H1 (cell line): ENCODE measurements at regions of chr9 and their contacts with region 1.

Region 1: DNA sequence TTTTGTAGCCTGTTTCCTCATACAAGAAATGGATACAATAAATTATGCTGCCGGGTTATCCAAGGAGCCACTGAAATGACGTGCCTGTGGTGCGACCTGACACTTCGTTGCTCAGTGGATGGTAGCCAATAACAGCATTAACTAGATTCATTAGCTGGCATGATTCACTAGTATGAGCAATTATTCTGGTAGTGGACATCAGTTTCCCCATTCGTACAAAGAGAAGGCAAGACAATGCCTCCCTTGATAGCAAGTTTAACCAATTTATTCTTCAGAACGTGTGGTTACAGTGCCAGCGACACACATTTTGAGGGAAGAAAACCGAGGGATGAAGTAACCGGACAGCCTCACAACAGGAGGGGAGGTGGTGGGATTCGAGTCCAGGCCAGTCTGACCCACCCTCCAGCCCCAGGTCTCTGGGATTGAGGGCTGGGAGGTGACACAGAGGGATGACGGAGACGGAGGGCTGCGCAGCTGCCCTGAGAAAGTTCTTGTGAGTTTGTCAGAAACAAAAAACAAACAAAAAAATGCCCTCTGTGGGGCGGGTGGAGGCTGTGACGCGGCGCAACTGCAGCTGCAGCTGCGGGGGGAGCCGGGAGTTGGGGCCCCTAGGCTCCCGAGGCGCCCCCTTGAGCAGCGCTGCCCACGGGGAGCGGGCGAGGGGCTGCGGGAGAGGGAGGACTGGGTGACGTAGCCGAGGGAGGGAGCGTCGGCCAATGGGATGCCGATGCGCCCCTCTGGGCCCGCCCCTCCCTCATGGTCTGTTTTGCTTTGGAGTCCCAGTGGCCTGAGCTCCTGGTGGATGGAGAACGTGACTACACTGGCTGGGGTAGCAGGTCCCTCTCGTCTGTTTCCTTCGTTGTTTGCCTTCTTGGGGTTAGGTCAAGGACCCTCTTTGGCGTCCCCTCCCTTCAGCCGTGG is 10.9 kb downstream of the LHX2 start:
- DNase-seq: peak in 1 of 2 experiments; percentile 83
- H3K4me3 ChIP-seq: peak overlapping the region in 1 of 4 experiments; percentile 51; a peak in 2 of 8 replicates
- H3K27ac ChIP-seq: no peak overlapping the region
- H3K4me1 ChIP-seq: peaks cover 10 to 19% (median 13%) of the 10 kb centered on the region in 4 experiments
- H3K27me3 ChIP-seq: peaks cover 33 to 69% (median 55%) of the 10 kb centered on the region in 4 experiments
- CTCF ChIP-seq: peak in 1 of 3 experiments; percentile 23; a peak in 1 of 4 replicates
- EP300 ChIP-seq: no peak
- POLR2A ChIP-seq: no peak
- RAD21 ChIP-seq: peak in 1 of 2 experiments; percentile 5; a peak in 2 of 4 replicates

Region 2: GRCh38 chr9:123954518-123955280 is 67.8 kb before region 1 on chr9:
- CTCF ChIA-PET with region 1: no interaction called
- POLR2A ChIA-PET with region 1: no interaction called
- DNase-seq: no peak
- H3K4me3 ChIP-seq: no peak overlapping the region
- H3K27ac ChIP-seq: no peak overlapping the region
- H3K4me1 ChIP-seq: peaks cover 0 to 7% (median 3%) of the 10 kb centered on the region in 4 experiments; a peak in 6 of 7 replicates
- H3K27me3 ChIP-seq: peaks cover 0 to 1% (median 0%) of the 10 kb centered on the region in 4 experiments; a peak in 2 of 7 replicates
- CTCF ChIP-seq: no peak
- EP300 ChIP-seq: no peak
- POLR2A ChIP-seq: no peak
- RAD21 ChIP-seq: no peak

Region 3: DNA sequence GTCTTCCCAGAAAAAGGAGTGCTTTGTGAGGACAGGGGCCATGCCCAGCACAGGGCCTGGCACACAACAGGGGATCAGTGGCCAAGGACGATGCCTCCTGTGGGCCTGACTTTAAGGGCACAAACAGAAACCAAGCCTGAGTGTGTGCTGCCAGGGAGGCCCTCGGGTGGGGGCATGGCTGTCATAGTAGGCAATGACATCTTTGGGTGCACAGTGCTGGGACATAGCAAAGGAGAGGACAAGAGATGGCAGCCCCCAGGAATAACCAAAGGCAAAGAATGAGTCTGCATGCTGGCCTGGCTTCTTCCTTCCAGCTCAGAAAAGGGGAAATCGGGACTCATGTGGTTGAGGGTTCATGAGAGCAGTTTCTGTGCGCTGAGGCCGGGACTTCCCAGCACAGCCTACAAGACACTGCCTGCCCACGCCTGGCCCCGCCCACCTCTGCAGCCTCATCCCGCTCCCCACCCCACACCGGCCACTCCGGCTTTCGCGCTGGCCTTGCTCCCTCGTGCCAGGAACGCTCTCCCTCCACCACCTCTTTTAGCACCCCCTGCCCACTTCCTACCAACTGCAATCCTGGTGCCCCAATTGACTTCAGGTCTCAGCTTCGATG is 24.7 kb before region 1 on chr9:
- CTCF ChIA-PET with region 1: interaction called, 6 read pairs
- POLR2A ChIA-PET with region 1: interaction called, 11 read pairs
- DNase-seq: peak in 1 of 2 experiments; percentile 62
- H3K4me3 ChIP-seq: peak overlapping the region in 1 of 4 experiments; percentile 55; a peak in 2 of 8 replicates
- H3K27ac ChIP-seq: no peak overlapping the region
- H3K4me1 ChIP-seq: peaks cover 7 to 28% (median 10%) of the 10 kb centered on the region in 4 experiments
- H3K27me3 ChIP-seq: peaks cover 69 to 85% (median 81%) of the 10 kb centered on the region in 4 experiments
- CTCF ChIP-seq: no peak
- EP300 ChIP-seq: no peak
- POLR2A ChIP-seq: no peak
- RAD21 ChIP-seq: no peak